ENCODE measurements at regions of chr14 and their contacts with region 1.

Region 1: GRCh38 chr14:51846631-51847488 is 13.6 kb upstream of the GNG2 start:
- DNase-seq: peak; percentile 96
- H3K4me3 Mint-ChIP-seq: peak overlapping the region; percentile 80
- H3K27ac Mint-ChIP-seq: peak overlapping the region; percentile 95
- H3K4me1 Mint-ChIP-seq: peaks cover 67% of the 10 kb centered on the region
- H3K27me3 Mint-ChIP-seq: no peaks in the 10 kb centered on the region

Region 2: GRCh38 chr14:51860164-51860824 is 13.4 kb after region 1 on chr14 and contains the start of gene GNG2:
- CTCF ChIA-PET with region 1: interaction called, 18 read pairs
- POLR2A ChIA-PET with region 1: interaction called, 16 read pairs
- DNase-seq: peak; percentile 90
- H3K4me3 Mint-ChIP-seq: peak within 1 kb of the TSS; percentile 89
- H3K27ac Mint-ChIP-seq: peak within 1 kb of the TSS; percentile 92
- H3K4me1 Mint-ChIP-seq: peaks cover 56% of the 10 kb centered on the region
- H3K27me3 Mint-ChIP-seq: no peaks in the 10 kb centered on the region
- total RNA-seq, gene GNG2: 248 to 260 TPM

Region 3: GRCh38 chr14:52729925-52730667 is 883.2 kb after region 1 on chr14 and contains the start of gene STYX:
- CTCF ChIA-PET with region 1: no interaction called
- POLR2A ChIA-PET with region 1: interaction called, 12 read pairs
- DNase-seq: peak; percentile 98
- H3K4me3 Mint-ChIP-seq: peak within 1 kb of the TSS; percentile 92
- H3K27ac Mint-ChIP-seq: peak within 1 kb of the TSS; percentile 91
- H3K4me1 Mint-ChIP-seq: peaks cover 27% of the 10 kb centered on the region
- H3K27me3 Mint-ChIP-seq: no peaks in the 10 kb centered on the region
- total RNA-seq, gene STYX: 20.7 to 24.4 TPM

Measured in activated CD4-positive, alpha-beta T cell treated with anti-CD3 and anti-CD28 coated beads, Interleukin-2, amount 10 ng/mL, durations not matched to agents 7 days and 5 days (primary cell).